ENCODE measurements at regions of chr14 and their contacts with region 1.

Region 1: GRCh38 chr14:102524466-102525218 is 15.1 kb upstream of the ANKRD9 start:
- DNase-seq: peak; percentile 97
- ATAC-seq: peak; percentile 96
- H3K4me3 Mint-ChIP-seq: peak overlapping the region; percentile 91
- H3K27ac Mint-ChIP-seq: peak overlapping the region; percentile 81
- H3K4me1 Mint-ChIP-seq: peaks cover 28% of the 10 kb centered on the region
- H3K27me3 Mint-ChIP-seq: no peaks in the 10 kb centered on the region
- CTCF ChIP-seq: peak; percentile 61

Region 2: DNA sequence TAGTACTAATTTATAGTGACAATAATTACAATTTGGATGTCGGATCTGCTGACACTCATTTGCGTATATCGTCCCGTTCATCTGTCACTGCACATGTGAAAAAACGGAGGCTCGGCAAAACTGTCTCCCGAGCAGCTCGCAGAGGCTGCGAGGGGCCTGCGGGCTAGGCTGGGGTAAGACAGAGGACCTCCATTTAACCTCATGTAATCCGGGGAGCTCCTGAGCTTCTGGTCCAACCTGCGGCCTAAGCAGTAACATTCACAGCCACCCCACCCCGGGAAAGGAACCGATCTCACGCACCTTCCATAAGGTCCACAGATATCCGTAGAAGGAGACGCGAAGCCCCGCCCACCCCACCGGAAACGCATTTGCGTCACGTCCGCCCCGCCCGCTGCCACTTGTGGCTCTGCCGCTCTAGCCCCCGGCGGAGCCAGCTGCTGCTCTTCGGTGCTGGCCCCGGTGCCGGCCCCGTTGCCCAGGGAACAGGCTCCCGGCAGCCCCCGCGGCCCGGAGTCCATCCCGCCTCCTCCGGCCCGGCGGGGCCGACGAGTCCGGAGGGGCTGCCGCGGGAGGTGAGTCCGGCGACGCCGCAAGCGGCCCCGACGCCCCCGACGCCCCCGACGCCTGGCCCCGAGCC is 162.0 kb before region 1 on chr14 and contains the starts of genes CINP and TECPR2:
- CTCF ChIA-PET with region 1: no interaction called
- POLR2A ChIA-PET with region 1: interaction called, 11 read pairs
- intact Hi-C with region 1: no loop called
- DNase-seq: peak; percentile 92
- ATAC-seq: peak; percentile 82
- H3K4me3 Mint-ChIP-seq: no peak within 1 kb of the TSS
- H3K27ac Mint-ChIP-seq: peak within 1 kb of the TSS; percentile 97
- H3K4me1 Mint-ChIP-seq: peaks cover 35% of the 10 kb centered on the region
- H3K27me3 Mint-ChIP-seq: no peaks in the 10 kb centered on the region
- CTCF ChIP-seq: no peak
- total RNA-seq, gene CINP: 48.6 and 57.5 TPM in 2 replicates
- total RNA-seq, gene TECPR2: 9.9 and 11.8 TPM in 2 replicates

Region 3: GRCh38 chr14:102565331-102565887 is 40.8 kb after region 1 on chr14:
- CTCF ChIA-PET with region 1: interaction called, 4 read pairs
- POLR2A ChIA-PET with region 1: interaction called, 12 read pairs
- intact Hi-C with region 1: loop called (anchors 1 kb)
- DNase-seq: no peak
- ATAC-seq: peak; percentile 68
- H3K4me3 Mint-ChIP-seq: peak overlapping the region; percentile 51
- H3K27ac Mint-ChIP-seq: peak overlapping the region; percentile 65
- H3K4me1 Mint-ChIP-seq: peaks cover 39% of the 10 kb centered on the region
- H3K27me3 Mint-ChIP-seq: no peaks in the 10 kb centered on the region
- CTCF ChIP-seq: no peak

Region 4: GRCh38 chr14:102917469-102918211 is 393.0 kb after region 1 on chr14:
- CTCF ChIA-PET with region 1: interaction called, 6 read pairs
- POLR2A ChIA-PET with region 1: no interaction called
- intact Hi-C with region 1: loop called (anchors 1 kb)
- DNase-seq: peak; percentile 64
- ATAC-seq: peak; percentile 23
- H3K4me3 Mint-ChIP-seq: no peak overlapping the region
- H3K27ac Mint-ChIP-seq: peak overlapping the region; percentile 42
- H3K4me1 Mint-ChIP-seq: peaks cover 18% of the 10 kb centered on the region
- H3K27me3 Mint-ChIP-seq: no peaks in the 10 kb centered on the region
- CTCF ChIP-seq: no peak

Measured in activated B cell treated with CpG ODN at 0.5 μM for 24 hours (primary cell).